ENCODE measurements at regions of chr22 and their contacts with region 1.

Region 1: DNA sequence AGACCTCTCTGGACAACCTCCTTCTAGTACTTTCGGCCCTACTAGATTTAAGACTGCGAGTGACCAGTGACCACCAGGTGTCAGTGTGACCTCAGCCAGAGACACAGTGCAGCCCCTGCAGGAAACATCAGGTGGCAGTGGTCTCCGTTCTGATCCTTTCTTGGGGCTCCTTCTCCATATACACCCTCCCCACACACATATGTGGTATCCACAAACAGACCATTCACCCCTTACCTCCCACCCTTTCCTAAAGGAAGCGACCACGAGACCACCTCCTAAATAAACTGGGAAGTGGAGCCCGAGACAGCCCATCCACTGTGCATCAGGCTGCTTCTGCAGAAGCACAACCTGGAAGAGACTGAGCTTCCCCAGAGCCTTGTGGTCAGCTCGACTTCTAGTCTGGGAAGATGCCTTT is 38.5 kb upstream of the CYP2D6 start:
- DNase-seq: peak; percentile 74 to 86
- H3K4me3 ChIP-seq: no peak overlapping the region
- H3K4me1 ChIP-seq: no peaks in the 10 kb centered on the region
- H3K27me3 ChIP-seq: no peaks in the 10 kb centered on the region

Region 2: DNA sequence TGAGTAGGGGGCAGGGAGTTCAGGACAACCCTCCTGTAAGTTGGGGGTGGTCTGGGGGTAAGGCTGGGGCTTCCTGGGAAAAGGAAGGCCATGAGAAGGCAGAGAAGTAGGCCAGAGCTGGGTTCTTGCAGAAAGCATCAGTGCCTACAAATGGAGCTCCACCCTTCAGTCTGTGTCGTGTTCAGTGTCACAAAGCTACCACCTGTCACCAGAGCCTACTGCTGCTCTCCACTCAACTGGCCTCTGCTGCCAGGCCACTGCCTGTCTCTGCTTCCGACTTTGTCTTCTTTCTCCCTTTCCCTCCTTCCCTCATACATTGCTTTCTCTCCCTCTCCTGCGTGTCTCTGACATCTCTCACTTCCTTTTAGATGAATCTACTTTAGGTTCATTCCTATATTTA is 173.9 kb before region 1 on chr22:
- in situ Hi-C with region 1: no loop called
- DNase-seq: no peak
- H3K4me3 ChIP-seq: no peak overlapping the region
- H3K4me1 ChIP-seq: no peaks in the 10 kb centered on the region
- H3K27me3 ChIP-seq: no peaks in the 10 kb centered on the region

Region 3: DNA sequence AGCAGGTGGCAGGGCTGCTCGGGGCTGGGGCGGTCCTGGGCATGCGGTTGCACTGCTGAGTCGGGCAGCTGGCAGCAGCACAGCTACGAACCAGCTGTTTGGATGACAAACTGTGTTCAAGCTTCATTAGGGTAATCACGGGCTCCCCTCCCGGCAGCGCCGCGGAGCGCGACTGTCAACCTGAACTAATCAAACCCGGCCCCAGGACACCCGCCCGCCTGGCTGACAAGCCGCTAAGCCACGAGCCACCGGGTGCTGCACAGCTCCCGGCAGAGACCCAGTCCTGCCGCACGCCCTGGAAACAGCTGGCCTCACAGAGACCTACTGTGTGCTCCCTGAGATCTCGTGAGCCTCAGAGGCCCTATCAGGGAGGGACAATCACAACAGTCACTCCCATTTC is 162.0 kb after region 1 on chr22:
- in situ Hi-C with region 1: no loop called
- DNase-seq: peak in 1 of 2 experiments; percentile 42
- H3K4me3 ChIP-seq: no peak overlapping the region
- H3K4me1 ChIP-seq: no peaks in the 10 kb centered on the region
- H3K27me3 ChIP-seq: no peaks in the 10 kb centered on the region

Region 4: DNA sequence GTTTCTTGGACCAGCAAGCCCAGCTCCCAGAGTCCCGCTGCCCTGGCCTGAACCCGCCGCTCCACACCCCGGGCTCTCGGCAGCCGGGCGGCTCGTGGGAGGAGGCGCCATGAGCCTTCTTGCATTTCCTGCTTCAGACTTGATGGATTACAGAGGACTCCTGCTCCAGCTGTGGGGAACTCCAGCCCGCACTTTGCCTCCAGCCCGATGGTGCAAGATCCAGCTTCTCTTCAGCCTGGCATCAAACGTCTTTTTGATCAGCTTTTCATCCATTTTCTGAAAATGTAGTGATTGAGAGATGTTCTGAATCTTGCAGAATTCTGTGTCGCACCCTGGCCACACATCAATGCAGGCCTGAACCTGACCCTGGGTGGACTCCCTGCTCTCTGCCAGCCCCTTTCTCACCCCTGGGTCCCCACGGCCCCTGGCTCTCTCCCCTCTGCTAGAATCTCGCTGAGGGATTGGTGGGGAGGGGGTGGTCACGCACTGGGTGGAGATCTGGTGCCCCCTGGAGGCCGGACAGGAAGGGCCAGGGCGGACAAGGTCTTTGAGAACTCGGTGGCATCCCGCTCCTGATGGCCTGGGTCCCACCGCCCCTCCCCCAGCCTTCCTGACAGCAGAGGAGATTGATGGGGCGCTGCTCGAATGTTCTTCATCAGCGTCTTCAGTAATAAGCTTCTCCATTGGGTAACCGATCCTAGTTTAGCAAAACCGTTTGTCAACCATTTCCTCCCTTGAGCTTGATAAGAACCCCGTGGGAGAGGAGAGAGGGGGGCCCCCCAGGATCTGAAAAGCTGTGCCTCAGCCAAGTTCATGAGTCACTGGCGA is 275.2 kb after region 1 on chr22:
- in situ Hi-C with region 1: loop called (anchors 5 kb)
- DNase-seq: peak; percentile 65 to 93
- H3K4me3 ChIP-seq: peak overlapping the region; percentile 16
- H3K4me1 ChIP-seq: peaks cover 10% of the 10 kb centered on the region
- H3K27me3 ChIP-seq: no peaks in the 10 kb centered on the region